ENCODE measurements at regions of chr17 and their contacts with region 1.

Region 1: DNA sequence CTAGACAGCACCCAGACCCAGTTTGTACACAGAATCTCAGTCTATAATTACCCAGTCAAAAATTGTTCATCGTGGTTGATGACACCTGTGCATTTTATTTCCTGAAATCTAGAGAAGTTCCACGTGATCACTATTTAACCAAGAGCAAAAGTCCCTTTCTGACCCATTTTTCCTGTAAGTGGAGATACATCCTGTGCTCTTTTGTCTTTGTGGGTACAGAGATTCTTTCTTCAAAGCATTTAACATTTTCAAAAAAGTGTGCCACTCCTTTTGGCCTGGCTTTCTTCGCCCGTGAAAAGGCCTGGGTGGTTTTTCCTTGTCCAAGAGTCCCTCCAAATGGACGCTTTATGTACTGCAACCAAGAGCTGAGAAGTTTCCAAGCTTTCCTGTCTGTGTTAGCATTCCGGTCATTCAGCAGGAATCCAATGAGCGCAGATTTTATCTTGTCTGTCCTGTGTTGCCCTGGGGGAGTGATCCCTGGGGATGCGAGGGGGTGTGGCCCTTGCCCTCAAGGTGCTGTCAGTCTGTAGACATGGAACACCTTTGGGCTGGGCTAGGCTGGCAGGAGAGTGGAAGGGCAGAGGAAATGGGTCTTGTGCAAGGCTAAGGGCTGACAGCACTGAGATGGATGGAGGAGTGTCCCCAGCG is 161.1 kb upstream of the CACNG5 start:
- DNase-seq: peak; percentile 54
- H3K4me3 Mint-ChIP-seq: peak overlapping the region; percentile 27
- H3K27ac Mint-ChIP-seq: peak overlapping the region; percentile 83
- H3K4me1 Mint-ChIP-seq: peaks cover 68% of the 10 kb centered on the region
- H3K27me3 Mint-ChIP-seq: no peaks in the 10 kb centered on the region

Region 2: GRCh38 chr17:66255112-66255511 is 418.7 kb before region 1 on chr17:
- CTCF ChIA-PET with region 1: interaction called, 3 read pairs
- POLR2A ChIA-PET with region 1: no interaction called
- intact Hi-C with region 1: loop called (anchors 1 kb)
- DNase-seq: peak; percentile 28
- H3K4me3 Mint-ChIP-seq: peak overlapping the region; percentile 11
- H3K27ac Mint-ChIP-seq: peak overlapping the region; percentile 24
- H3K4me1 Mint-ChIP-seq: peaks cover 13% of the 10 kb centered on the region
- H3K27me3 Mint-ChIP-seq: no peaks in the 10 kb centered on the region

Region 3: DNA sequence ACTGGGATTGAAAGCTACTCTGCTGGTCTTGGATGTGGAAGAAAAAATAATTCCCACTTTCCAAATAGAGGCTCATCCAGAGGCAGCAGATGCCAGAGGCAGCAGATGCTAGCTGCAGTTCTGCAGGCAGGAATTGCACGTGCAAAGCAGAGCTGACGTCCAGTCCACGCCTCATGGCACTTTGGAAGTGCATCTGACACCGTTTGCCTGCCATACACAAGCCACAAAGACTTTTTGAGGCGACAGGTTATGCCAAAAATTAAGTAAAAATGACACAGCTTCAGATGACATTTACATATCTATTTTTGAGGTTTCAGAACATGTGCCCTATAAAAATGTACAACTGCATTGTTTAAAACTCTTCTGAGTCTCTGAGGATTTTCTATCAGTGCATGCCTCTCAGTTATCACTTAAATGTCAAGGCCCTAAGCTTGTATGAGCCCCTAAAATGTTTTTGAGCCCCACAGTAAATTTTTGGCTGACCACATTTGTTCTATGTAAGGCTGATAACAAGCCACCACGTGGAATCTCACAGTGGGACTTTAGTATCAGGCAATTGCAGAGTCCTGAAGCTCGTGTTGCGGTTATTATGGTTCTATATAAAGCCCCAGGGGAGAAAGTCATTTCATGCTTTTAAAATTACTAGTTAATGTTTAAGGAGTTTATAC is 132.2 kb before region 1 on chr17:
- CTCF ChIA-PET with region 1: no interaction called
- POLR2A ChIA-PET with region 1: no interaction called
- intact Hi-C with region 1: loop called (anchors 10 kb)
- DNase-seq: no peak
- H3K4me3 Mint-ChIP-seq: no peak overlapping the region
- H3K27ac Mint-ChIP-seq: no peak overlapping the region
- H3K4me1 Mint-ChIP-seq: peaks cover 69% of the 10 kb centered on the region
- H3K27me3 Mint-ChIP-seq: no peaks in the 10 kb centered on the region

Region 4: GRCh38 chr17:66633317-66633965 is 40.4 kb before region 1 on chr17:
- CTCF ChIA-PET with region 1: no interaction called
- POLR2A ChIA-PET with region 1: interaction called, 3 read pairs
- intact Hi-C with region 1: loop called (anchors 1 kb)
- DNase-seq: peak; percentile 70
- H3K4me3 Mint-ChIP-seq: no peak overlapping the region
- H3K27ac Mint-ChIP-seq: peak overlapping the region; percentile 61
- H3K4me1 Mint-ChIP-seq: peaks cover 55% of the 10 kb centered on the region
- H3K27me3 Mint-ChIP-seq: no peaks in the 10 kb centered on the region

Region 5: GRCh38 chr17:66855204-66855603 is 181.4 kb after region 1 on chr17:
- CTCF ChIA-PET with region 1: no interaction called
- POLR2A ChIA-PET with region 1: no interaction called
- intact Hi-C with region 1: no loop called
- DNase-seq: peak; percentile 60
- H3K4me3 Mint-ChIP-seq: no peak overlapping the region
- H3K27ac Mint-ChIP-seq: no peak overlapping the region
- H3K4me1 Mint-ChIP-seq: no peaks in the 10 kb centered on the region
- H3K27me3 Mint-ChIP-seq: no peaks in the 10 kb centered on the region

Region 6: GRCh38 chr17:66906321-66907278 is 232.8 kb after region 1 on chr17:
- CTCF ChIA-PET with region 1: no interaction called
- POLR2A ChIA-PET with region 1: no interaction called
- intact Hi-C with region 1: no loop called
- DNase-seq: peak; percentile 79
- H3K4me3 Mint-ChIP-seq: no peak overlapping the region
- H3K27ac Mint-ChIP-seq: no peak overlapping the region
- H3K4me1 Mint-ChIP-seq: peaks cover 4% of the 10 kb centered on the region
- H3K27me3 Mint-ChIP-seq: peaks cover 2% of the 10 kb centered on the region

Measured in activated CD4-positive, alpha-beta memory T cell treated with anti-CD3 and anti-CD28 coated beads for 36 hours (primary cell).